B cell (primary cell): ENCODE measurements at regions of chr13 and their contacts with region 1.

Region 1: DNA sequence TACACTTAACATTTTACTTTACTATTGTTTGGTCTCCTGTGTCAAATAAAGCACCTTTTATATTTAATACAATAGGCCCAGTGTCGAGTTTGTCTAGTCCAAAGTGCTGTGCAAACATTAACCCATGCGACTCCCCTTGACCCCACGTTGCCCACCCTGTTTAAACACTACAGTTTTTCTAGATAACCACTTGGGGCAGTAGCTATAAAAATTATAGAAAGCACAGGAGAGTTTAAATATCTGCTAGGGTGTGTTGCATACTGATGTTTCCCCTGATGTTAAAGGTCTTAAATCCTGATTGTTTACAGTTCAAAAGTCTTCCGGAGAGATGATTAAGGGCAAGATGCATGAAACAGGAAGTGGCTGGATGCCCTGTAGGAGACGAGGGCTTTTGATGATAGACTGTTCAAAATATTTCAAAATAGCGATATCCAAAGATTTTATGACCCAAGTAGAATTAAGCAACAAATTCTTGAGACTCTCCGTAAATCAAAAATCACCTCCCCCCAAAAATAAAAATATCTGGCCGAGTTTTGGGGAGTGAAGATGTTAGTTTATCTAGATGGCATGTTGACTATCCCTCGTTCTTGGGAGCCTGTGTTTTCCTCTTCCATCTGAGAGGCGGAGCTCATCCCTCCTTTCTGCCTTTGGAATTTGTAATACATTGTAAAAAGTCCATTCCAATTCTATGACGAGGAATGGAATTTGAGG is 167.1 kb downstream of the FGF9 start:
- DNase-seq: no peak
- ATAC-seq: no peak
- H3K4me3 ChIP-seq: no peak overlapping the region
- H3K4me3 Mint-ChIP-seq: no peak overlapping the region
- H3K27ac ChIP-seq: no peak overlapping the region
- H3K27ac Mint-ChIP-seq: no peak overlapping the region
- H3K4me1 ChIP-seq: no peaks in the 10 kb centered on the region
- H3K4me1 Mint-ChIP-seq: no peaks in the 10 kb centered on the region
- H3K27me3 ChIP-seq: no peaks in the 10 kb centered on the region
- H3K27me3 Mint-ChIP-seq: no peaks in the 10 kb centered on the region
- CTCF ChIP-seq: no peak

Region 2: GRCh38 chr13:21043898-21044297 is 794.1 kb before region 1 on chr13:
- CTCF ChIA-PET with region 1: no interaction called
- POLR2A ChIA-PET with region 1: no interaction called
- intact Hi-C with region 1: no loop called
- DNase-seq: no peak
- ATAC-seq: no peak
- H3K4me3 ChIP-seq: no peak overlapping the region
- H3K4me3 Mint-ChIP-seq: no peak overlapping the region
- H3K27ac ChIP-seq: no peak overlapping the region
- H3K27ac Mint-ChIP-seq: no peak overlapping the region
- H3K4me1 ChIP-seq: peaks cover 18 to 26% of the 10 kb centered on the region in 2 donors
- H3K4me1 Mint-ChIP-seq: peaks cover 23% of the 10 kb centered on the region
- H3K27me3 ChIP-seq: peaks cover 0 to 6% (median 0%) of the 10 kb centered on the region in 4 experiments
- H3K27me3 Mint-ChIP-seq: peaks cover 3% of the 10 kb centered on the region
- CTCF ChIP-seq: no peak

Region 3: GRCh38 chr13:21894091-21894490 is 56.1 kb after region 1 on chr13:
- CTCF ChIA-PET with region 1: no interaction called
- POLR2A ChIA-PET with region 1: no interaction called
- intact Hi-C with region 1: no loop called
- DNase-seq: no peak
- ATAC-seq: no peak
- H3K4me3 ChIP-seq: no peak overlapping the region
- H3K4me3 Mint-ChIP-seq: no peak overlapping the region
- H3K27ac ChIP-seq: no peak overlapping the region
- H3K27ac Mint-ChIP-seq: no peak overlapping the region
- H3K4me1 ChIP-seq: no peaks in the 10 kb centered on the region
- H3K4me1 Mint-ChIP-seq: no peaks in the 10 kb centered on the region
- H3K27me3 ChIP-seq: no peaks in the 10 kb centered on the region
- H3K27me3 Mint-ChIP-seq: no peaks in the 10 kb centered on the region
- CTCF ChIP-seq: no peak

Region 4: DNA sequence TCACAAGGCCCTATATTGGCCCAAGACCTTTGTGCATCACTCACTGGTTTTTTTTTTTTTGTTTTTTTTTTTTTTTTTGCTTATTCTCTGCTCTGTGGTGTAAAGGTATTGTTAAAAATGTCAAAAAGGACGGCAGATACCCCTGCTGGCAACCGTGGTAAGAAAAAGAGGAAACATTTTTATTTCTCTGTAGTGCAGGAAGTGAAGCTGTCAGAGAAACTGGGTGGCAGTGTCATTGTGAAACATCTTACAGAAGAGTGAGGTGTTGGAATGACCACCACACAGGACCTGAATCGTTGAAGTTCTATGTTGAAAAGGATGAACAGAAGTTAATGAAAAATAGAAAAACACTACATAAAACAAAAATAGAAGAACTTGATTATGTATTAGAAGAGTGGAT is 179.2 kb after region 1 on chr13:
- CTCF ChIA-PET with region 1: no interaction called
- POLR2A ChIA-PET with region 1: no interaction called
- intact Hi-C with region 1: loop called (anchors 10 kb)
- DNase-seq: peak; percentile 30
- ATAC-seq: peak; percentile 77
- H3K4me3 ChIP-seq: no peak overlapping the region
- H3K4me3 Mint-ChIP-seq: no peak overlapping the region
- H3K27ac ChIP-seq: no peak overlapping the region
- H3K27ac Mint-ChIP-seq: no peak overlapping the region
- H3K4me1 ChIP-seq: peaks cover 0 to 4% of the 10 kb centered on the region in 2 donors
- H3K4me1 Mint-ChIP-seq: peaks cover 9% of the 10 kb centered on the region
- H3K27me3 ChIP-seq: no peaks in the 10 kb centered on the region
- H3K27me3 Mint-ChIP-seq: peaks cover 3% of the 10 kb centered on the region
- CTCF ChIP-seq: peak; percentile 7